Common myeloid progenitor, CD34-positive (primary cell): ENCODE measurements at regions of chr6 and their contacts with region 1.

Region 1: GRCh38 chr6:157235600-157236039 is 87.7 kb downstream of the TMEM242 start:
- DNase-seq: peak; percentile 74 to 88 (median 85)
- H3K4me3 ChIP-seq: peak overlapping the region; percentile 2 to 76 (median 72)
- H3K27ac ChIP-seq: no peak overlapping the region
- H3K4me1 ChIP-seq: peaks cover 0 to 29% (median 18%) of the 10 kb centered on the region in 4 experiments
- H3K27me3 ChIP-seq: peaks cover 3 to 51% (median 23%) of the 10 kb centered on the region in 5 experiments

Region 2: DNA sequence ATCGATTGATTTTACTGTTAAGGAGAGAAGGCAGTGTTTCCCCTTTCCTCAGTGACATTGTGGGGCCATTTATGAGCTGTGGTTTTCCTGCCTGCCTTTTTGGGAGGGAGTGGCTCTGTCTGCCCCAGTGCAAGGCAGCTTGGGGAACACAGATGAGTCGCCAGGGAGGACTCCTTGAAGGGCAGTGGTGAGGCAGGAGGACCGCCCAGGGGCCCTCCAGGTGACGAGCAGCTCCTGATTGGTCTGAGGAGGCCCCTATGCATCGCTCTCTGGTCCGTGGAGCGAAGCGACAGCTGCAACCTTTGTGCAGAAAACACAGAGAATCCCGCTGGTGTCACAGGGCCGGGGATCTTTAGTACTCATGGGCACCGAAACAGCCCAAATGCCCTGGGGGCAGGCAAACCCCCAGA is 12.6 kb before region 1 on chr6:
- CTCF ChIA-PET with region 1: interaction called, 21 read pairs
- POLR2A ChIA-PET with region 1: interaction called, 3 read pairs
- DNase-seq: peak; percentile 43 to 76 (median 71)
- H3K4me3 ChIP-seq: peak overlapping the region in 4 of 7 experiments; percentile 36 to 62 (median 50)
- H3K27ac ChIP-seq: no peak overlapping the region
- H3K4me1 ChIP-seq: peaks cover 0 to 46% (median 35%) of the 10 kb centered on the region in 4 experiments
- H3K27me3 ChIP-seq: peaks cover 0 to 6% (median 0%) of the 10 kb centered on the region in 5 experiments

Region 3: DNA sequence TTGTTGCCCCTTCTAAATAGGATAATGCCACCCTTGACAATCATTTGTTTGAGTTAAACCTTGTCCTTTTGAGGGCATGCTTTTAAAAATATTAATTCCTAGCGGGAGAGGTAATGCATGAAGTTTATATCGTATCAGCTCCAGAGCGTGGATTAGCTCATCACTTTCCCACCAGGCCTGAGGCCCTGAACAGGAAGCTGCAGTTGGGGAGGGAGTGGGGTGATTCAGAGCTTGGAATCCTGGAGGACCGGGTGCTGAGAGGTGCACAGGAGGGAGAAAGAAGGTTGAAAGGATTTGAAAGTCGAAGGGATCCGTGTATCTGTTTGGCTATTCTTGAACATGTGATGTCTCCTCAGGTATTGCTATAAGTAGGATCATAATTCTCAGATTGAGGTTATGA is 170.4 kb after region 1 on chr6:
- CTCF ChIA-PET with region 1: no interaction called
- POLR2A ChIA-PET with region 1: no interaction called
- DNase-seq: no peak
- H3K4me3 ChIP-seq: no peak overlapping the region
- H3K27ac ChIP-seq: no peak overlapping the region
- H3K4me1 ChIP-seq: no peaks in the 10 kb centered on the region
- H3K27me3 ChIP-seq: no peaks in the 10 kb centered on the region